Activated naive CD4-positive, alpha-beta T cell treated with anti-CD3 and anti-CD28 coated beads for 36 hours (primary cell): ENCODE measurements at regions of chr7 and their contacts with region 1.

Region 1: GRCh38 chr7:141220263-141220880 is 146.5 kb downstream of the TMEM178B start:
- DNase-seq: no peak
- H3K4me3 Mint-ChIP-seq: no peak overlapping the region
- H3K27ac Mint-ChIP-seq: no peak overlapping the region
- H3K4me1 Mint-ChIP-seq: no peaks in the 10 kb centered on the region
- H3K27me3 Mint-ChIP-seq: no peaks in the 10 kb centered on the region

Region 2: DNA sequence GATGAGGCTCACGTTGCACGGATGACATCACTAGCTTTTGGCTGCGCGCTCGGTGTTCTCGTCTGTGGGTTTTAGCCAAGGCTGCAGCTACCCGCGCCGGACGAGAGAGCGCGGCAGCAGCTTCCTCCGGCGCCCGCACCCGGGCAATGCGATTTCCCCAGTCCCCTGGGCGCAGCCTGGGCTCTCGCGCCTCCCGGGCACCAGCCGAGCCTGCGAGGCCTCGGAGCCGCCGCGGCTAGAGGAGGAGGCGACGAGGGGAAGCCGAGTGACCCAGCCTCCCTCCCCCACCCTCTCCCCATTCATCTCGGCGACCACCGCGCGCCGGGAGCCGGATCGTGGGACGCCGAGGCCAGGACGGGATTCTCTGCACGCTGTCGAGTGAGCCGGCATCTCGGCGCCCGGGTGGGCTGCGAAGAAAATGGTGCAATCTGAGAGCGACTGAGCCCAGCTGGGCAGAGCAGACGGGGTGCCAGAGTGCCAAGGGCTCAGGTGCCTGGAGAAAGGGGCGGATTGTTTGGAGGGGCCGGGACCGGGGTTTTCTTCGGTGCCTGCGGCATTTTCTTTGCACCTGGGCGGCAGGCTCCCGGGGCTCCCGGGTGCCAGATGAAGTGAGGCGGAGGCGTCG is 147.7 kb before region 1 on chr7:
- CTCF ChIA-PET with region 1: no interaction called
- intact Hi-C with region 1: loop called (anchors 10 kb)
- DNase-seq: peak; percentile 54
- H3K4me3 Mint-ChIP-seq: peak overlapping the region; percentile 64
- H3K27ac Mint-ChIP-seq: no peak overlapping the region
- H3K4me1 Mint-ChIP-seq: peaks cover 15% of the 10 kb centered on the region
- H3K27me3 Mint-ChIP-seq: peaks cover 53% of the 10 kb centered on the region